ENCODE measurements at regions of chr11 and their contacts with region 1.

Region 1: DNA sequence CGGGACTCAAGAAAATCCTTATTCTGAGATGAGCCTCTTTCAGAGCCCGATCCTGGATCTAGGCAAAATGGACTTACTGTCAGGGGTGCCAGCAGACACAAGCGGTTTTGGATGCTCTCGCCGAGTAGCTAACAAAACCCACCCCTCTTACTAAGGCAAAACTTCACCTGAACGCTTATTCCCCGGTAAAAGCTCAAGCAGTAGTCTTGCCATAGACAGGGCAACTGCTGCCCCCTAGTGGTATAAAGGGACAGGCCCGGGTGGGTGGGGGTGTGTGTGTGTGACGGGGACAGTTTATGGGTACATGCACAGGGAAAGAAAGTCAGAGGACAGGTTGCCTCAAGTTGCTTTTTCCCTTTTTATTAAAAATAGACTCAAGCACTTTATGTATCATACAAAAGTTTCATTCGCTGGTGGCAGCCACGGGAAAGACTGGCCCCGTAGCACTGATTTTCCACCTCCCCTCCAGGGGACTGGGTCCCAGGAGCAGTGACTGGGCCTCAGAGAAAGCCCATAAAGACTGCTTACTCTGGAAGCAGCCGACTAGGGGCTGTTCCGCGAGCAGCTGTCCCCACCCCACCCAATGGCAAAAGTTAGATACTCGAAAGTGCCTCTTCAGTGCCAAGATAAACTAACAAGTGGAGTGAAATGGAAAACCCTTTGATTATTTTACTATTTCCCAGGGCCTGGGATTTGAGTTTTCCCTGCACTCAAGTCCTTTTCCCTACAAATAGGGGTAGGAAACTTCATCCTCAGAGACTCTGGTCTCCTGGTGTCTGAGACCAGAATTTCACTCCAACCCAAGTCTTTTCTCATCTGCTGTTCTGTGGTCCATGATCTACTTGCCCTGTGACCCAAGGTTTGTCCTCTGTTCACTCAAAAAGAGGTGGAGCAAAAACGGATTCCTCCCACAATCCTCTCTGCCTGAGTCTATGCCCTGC is 4.7 kb downstream of the YPEL4 start:
- DNase-seq: peak; percentile 79 to 97
- H3K4me3 ChIP-seq: no peak overlapping the region
- CTCF ChIP-seq: peak in 1 of 3 donors; percentile 10
- POLR2A ChIP-seq: no peak

Region 2: DNA sequence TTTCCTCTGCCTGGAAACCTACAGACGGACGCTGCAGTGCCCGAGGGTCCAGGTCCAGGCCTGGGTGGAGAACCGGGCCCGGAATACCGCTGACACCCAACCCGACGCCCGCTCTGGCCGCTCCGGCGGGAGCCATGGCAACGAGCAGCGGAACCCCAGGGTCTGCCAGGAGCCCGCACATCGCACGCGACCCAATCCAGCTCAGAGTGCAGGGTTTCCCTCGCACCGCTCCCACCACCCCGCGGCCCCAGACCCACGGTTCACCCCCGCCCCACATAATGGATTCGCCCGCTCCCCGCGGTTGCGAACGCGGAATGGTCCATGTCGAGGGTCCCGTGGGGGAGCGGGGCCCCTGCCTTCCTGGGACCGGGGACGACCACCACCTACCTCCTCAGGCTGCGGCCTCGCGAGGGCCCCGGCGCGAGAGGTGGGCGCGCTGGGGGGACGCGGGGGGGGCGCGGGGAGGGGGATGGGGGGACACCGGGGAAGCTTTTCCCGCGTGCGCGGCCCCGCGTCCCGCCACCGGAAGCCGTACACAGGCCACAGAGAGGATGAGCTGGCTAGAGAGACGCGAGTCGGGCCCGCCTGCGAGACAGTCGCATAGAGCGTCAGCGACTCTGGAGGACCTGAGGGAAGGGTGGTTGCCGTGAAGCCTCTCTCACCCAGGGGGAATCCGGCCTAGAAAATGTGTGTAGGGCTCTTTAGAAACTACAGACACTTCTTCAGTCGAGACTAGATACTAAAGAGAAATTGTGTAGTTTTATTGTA is 309.5 kb before region 1 on chr11 and contains the start of gene SSRP1:
- intact Hi-C with region 1: loop called (anchors 5 kb)
- DNase-seq: peak; percentile 85 to 97
- H3K4me3 ChIP-seq: peak within 1 kb of the TSS; percentile 62
- CTCF ChIP-seq: no peak
- POLR2A ChIP-seq: no peak
- total RNA-seq, gene SSRP1: 66.1 to 76.1 (median 74.6) TPM

Region 3: DNA sequence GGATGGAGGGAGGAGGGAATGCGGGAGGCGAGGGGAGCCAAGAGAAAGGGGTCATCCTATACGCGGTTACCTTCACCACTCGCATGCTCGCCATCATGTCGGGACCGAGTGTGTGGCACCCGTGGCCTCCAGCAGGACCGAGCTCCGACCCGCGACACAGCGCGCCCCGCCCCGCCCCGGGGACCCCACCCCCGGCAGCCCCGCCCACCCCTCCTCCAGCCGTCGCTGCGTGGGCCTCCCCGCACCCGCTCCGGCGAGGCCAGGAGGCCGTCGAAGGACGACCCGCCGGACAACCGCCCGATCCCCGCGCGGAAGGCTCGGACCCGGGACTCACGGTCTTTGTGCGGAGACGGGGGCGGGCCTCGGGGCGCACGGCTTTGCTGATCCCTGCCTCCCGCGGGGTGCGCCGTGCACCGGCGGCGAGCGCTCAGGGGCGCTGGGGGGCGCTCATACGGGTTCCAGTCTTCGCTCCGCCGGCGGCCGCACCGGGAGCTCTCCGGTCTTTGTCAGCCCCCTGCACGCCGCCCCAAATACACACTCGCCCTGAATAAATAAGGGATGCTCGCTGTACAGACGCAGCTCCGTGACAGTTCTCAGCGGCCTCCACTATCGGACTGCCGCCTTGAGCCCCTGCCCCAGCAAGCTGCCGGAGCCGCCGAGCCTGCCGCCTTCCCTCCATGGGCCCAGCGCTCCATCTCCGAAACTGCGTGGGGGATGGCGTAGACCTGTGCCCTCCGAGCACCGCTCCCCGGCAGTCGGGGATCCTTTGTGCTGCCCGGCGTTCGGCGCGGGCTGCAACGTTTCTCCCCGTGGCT is 77.3 kb before region 1 on chr11 and contains the start of gene UBE2L6:
- intact Hi-C with region 1: loop called (anchors 5 kb)
- DNase-seq: peak; percentile 33 to 91
- H3K4me3 ChIP-seq: peak within 1 kb of the TSS; percentile 78
- CTCF ChIP-seq: no peak
- POLR2A ChIP-seq: no peak
- total RNA-seq, gene UBE2L6: 14.5 to 31.0 (median 19.9) TPM

Measured in lower leg skin (tissue), 4 donors.